ENCODE measurements at regions of chr12 and their contacts with region 1.

Region 1: DNA sequence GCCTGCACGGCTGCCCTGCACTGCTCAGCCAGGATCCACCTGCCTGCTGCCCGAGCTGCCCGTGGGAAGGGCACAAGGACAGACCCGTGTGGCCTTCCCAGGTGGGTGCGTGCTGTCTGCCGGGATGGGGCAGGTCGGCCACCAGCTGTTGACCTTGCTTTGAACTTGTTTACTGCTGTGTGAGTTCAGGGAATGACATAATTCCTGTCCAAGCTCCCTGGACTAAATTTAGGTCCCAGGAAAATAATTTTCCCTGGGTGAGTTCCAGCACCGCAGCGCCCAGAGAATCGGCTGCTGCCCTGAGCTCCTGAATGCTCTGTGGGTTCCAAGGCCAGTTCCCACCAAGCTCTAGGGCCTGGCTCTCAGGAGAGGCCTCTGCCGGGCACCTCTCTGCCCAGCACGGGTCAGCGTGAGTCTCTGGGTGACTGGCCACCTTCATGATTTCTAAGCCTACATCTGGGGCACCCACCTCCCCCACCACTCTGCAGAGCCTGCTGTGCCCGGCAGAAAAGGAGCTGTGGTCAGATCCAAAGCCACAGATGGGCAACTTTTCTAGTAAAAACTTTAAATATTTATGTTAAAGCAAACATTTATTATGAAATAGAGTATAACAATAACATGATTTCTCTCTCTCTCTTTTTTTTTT is 27.2 kb upstream of the MLXIP start:
- DNase-seq: no peak
- H3K4me3 ChIP-seq: no peak overlapping the region
- H3K4me1 ChIP-seq: no peaks in the 10 kb centered on the region
- H3K27me3 ChIP-seq: no peaks in the 10 kb centered on the region

Region 2: GRCh38 chr12:121917979-121918678 is 133.2 kb before region 1 on chr12 and contains the start of gene CFAP251:
- in situ Hi-C with region 1: no loop called
- DNase-seq: no peak
- H3K4me3 ChIP-seq: no peak within 1 kb of the TSS
- H3K4me1 ChIP-seq: no peaks in the 10 kb centered on the region
- H3K27me3 ChIP-seq: no peaks in the 10 kb centered on the region

Region 3: DNA sequence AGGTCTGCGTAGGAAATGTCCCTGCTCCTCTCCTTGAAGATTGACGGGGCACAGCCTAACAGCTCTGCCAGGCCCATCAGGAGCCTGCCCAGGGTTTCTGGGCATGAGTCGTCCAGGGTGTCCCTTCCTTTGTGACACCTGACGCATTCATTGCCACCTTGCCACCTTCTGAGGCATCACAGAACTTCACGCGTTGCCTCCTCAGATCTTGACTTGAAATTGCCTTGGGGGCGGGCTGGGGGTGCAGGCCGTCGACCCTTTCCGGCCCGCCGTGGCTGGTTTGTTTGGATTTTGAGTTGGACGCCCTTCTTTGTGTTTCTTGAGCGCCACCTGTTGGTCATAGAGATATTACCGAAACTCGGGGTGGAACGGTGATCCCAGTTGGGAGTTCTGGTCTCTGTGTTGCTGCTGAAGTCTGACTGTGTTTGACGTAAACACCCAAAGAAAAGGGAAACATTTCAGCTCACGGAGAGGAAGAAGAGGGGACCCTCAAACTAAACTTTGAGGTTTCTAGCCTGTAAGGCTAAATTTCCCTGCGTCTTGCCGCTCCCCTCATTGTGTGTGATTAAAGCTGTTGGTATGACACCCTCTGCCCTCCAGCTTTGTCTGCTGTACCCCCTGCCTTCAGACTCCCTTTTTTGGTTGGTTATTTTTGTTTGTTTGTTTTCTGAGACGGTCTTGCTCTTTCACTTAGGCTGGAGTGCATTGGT is 71.9 kb after region 1 on chr12:
- in situ Hi-C with region 1: loop called (anchors 5 kb)
- DNase-seq: peak; percentile 51 to 87
- H3K4me3 ChIP-seq: no peak overlapping the region
- H3K4me1 ChIP-seq: peaks cover 3% of the 10 kb centered on the region; the same call in 1 of the 2 replicates
- H3K27me3 ChIP-seq: no peaks in the 10 kb centered on the region

Region 4: GRCh38 chr12:122190842-122191668 is 139.7 kb after region 1 on chr12:
- in situ Hi-C with region 1: loop called (anchors 10 kb)
- DNase-seq: peak; percentile 57 to 85
- H3K4me3 ChIP-seq: no peak overlapping the region
- H3K4me1 ChIP-seq: no peaks in the 10 kb centered on the region
- H3K27me3 ChIP-seq: no peaks in the 10 kb centered on the region

Region 5: DNA sequence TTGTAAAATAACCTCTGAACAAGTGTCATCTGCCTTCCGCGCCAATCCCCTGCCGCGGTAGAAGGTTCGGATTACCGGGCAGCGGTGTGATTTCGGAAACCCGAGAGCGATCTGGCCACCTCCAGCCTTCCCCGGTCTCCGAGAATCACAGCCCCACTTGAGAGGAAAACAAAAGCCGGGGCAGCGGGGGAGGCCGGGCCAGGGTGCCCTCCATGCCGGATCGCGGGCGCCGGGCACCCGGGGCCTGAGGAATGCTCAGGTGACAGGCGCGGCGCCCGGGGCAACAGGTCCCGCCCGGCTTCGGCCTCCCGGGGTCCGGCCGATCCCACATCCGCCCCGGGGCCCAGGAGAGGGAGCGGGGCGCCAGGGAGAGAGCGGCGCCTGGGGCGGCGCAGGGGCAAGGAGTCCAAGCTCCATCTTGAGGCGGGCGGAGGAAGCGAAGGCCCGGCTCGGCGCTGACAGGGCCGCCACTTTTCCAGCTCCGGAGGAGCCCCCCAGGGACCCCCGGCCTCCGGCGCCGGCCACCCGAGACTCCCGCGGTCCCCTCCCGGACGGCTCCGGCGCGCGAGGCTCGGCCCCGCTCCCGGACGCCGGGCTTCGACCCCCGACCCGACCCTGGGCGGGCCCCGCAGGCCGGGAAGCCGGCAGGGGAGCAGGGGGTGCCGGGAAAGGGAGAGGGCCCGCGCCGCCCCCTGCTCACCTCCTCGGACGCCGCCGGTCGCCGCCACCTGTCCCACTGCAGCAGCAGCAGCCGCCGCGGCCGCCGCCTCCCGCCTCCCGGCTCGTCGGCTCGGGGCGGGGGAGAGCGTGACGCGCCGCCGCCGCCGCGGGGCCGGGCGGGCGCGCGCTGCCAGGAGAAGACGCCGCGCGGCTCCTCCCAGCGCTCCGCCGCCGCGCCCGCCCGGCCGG is 370.7 kb after region 1 on chr12 and contains the start of gene CLIP1:
- in situ Hi-C with region 1: no loop called
- DNase-seq: peak; percentile 35 to 73
- H3K4me3 ChIP-seq: peak within 1 kb of the TSS; percentile 70
- H3K4me1 ChIP-seq: peaks cover 21% of the 10 kb centered on the region
- H3K27me3 ChIP-seq: no peaks in the 10 kb centered on the region